Common myeloid progenitor, CD34-positive (primary cell): ENCODE measurements at regions of chr11 and their contacts with region 1.

Region 1: DNA sequence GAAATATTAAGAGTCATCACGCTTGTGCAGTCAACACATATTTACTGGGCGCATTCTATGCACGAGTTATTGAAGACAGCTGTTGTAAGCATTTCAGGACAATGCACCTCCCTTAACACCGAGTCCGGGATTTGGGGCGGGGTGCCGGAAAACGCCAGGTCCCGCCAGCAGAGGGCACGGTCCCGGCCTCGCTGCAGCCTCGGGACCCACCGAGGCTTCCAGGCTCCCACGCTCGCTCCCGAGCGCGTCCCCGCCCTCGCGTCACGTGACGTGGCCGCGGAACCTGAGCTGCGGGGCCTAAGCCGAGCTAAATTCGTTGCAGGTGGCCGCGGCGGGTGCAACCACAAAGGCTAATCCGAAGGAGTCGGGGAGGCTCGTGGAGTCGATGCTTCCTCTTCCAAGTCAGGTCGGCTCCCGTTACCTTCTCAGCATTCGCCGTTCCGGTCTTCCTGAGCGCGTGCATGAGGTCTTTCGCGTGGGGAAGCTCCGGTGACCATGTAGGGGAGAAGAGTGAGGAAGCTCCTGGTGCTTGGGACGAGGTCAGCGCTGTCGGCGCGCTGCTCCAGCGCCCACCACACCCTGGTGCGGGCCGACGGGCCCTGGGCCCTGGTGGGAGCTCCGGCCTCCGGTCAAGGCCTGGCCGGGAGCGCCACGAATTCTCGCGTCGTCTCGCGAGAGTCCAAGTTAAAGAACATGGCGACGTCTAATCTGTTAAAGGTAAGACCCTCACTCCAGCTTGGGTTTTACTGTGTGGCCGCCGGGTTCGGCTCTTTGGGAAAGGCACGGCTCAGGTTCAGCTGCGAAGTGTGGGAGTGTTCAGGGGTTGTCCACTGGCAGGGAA is at the start of gene CUL5:
- DNase-seq: peak; percentile 94 to 96 (median 96)
- H3K4me3 ChIP-seq: peak within 1 kb of the TSS; percentile 72 to 100 (median 94)
- H3K27ac ChIP-seq: peak within 1 kb of the TSS; percentile 100
- H3K4me1 ChIP-seq: peaks cover 12 to 31% (median 24%) of the 10 kb centered on the region in 4 experiments
- H3K27me3 ChIP-seq: no peaks in the 10 kb centered on the region

Region 2: GRCh38 chr11:108025387-108026080 is 16.7 kb after region 1 on chr11:
- CTCF ChIA-PET with region 1: interaction called, 12 read pairs
- POLR2A ChIA-PET with region 1: interaction called, 7 read pairs
- DNase-seq: peak in 2 of 3 donors; percentile 42 to 45
- H3K4me3 ChIP-seq: no peak overlapping the region
- H3K27ac ChIP-seq: peak overlapping the region; percentile 12 to 37
- H3K4me1 ChIP-seq: peaks cover 0 to 13% (median 9%) of the 10 kb centered on the region in 4 experiments
- H3K27me3 ChIP-seq: no peaks in the 10 kb centered on the region